ENCODE measurements at regions of chr14 and their contacts with region 1.

Region 1: DNA sequence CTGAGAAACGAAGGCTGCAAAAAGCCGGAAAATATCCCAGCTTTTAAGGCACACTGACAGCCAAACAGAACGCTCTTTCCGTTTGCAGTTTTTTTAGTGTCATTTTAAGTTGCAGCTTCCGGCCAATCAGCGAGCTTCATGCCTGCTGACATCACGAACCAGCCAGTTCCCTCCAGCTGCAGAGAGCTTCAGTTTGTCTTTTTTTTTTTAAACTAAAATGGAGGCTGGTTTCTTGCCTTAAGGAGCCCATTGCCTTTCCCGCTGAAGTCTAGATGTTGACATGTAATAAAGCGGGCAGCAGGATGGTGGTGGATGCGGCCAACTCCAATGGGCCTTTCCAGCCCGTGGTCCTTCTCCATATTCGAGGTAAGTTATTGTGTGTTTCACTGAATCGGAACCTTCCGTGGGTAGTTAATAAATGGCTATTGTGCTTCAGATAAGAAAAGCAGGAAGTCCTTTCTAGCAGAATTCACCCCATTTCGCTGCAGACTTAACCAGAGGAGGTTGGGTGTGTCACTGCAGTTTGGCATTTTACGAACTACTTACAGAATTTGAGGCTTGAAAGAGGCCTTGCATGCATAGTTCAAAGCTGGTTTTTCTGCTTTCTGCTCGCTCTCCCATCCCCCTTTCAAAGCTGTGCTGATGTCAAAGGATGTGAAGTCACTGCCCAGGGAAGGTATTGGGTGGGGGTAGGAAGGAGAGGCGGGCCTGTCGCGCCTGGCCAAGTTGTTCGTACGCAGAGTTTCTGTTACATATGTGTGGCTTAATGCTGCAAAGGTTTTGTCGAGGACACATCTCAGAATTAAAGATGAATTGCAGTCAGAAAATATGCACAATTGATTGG is 48.4 kb downstream of the PPP2R5C start:
- DNase-seq: peak; percentile 91
- ATAC-seq: peak; percentile 96
- H3K4me3 ChIP-seq: peak overlapping the region; percentile 73 to 84 (median 77)
- H3K27ac ChIP-seq: peak overlapping the region; percentile 99
- H3K4me1 ChIP-seq: peaks cover 52% of the 10 kb centered on the region
- H3K27me3 ChIP-seq: no peaks in the 10 kb centered on the region
- CTCF ChIP-seq: no peak
- EP300 ChIP-seq: 0 out of 4 replicates have a peak, but pooled peaks of 1 of the 2 experiments have one; percentile 3
- POLR2A ChIP-seq: peak; percentile 60 to 85
- RAD21 ChIP-seq: no peak

Region 2: GRCh38 chr14:101495827-101496775 is 313.8 kb before region 1 on chr14:
- CTCF ChIA-PET with region 1: no interaction called
- POLR2A ChIA-PET with region 1: no interaction called
- in situ Hi-C with region 1: no loop called
- intact Hi-C with region 1: no loop called
- DNase-seq: peak; percentile 9
- ATAC-seq: peak; percentile 82
- H3K4me3 ChIP-seq: no peak overlapping the region
- H3K27ac ChIP-seq: no peak overlapping the region
- H3K4me1 ChIP-seq: peaks cover 20% of the 10 kb centered on the region
- H3K27me3 ChIP-seq: peaks cover 2 to 20% of the 10 kb centered on the region in 2 experiments; a peak in 2 of 5 replicates
- CTCF ChIP-seq: no peak
- EP300 ChIP-seq: 0 out of 4 replicates have a peak, but pooled peaks of 1 of the 2 experiments have one; percentile 32
- POLR2A ChIP-seq: no peak
- RAD21 ChIP-seq: no peak

Region 3: GRCh38 chr14:101743701-101744100 is 66.2 kb before region 1 on chr14:
- CTCF ChIA-PET with region 1: no interaction called
- POLR2A ChIA-PET with region 1: no interaction called
- in situ Hi-C with region 1: no loop called
- intact Hi-C with region 1: no loop called
- DNase-seq: no peak
- ATAC-seq: no peak
- H3K4me3 ChIP-seq: no peak overlapping the region
- H3K27ac ChIP-seq: no peak overlapping the region
- H3K4me1 ChIP-seq: no peaks in the 10 kb centered on the region
- H3K27me3 ChIP-seq: peaks cover 0 to 4% of the 10 kb centered on the region in 2 experiments; a peak in 1 of 5 replicates
- CTCF ChIP-seq: no peak
- EP300 ChIP-seq: no peak
- POLR2A ChIP-seq: no peak
- RAD21 ChIP-seq: no peak

Region 4: GRCh38 chr14:101774006-101774795 is 35.7 kb before region 1 on chr14:
- CTCF ChIA-PET with region 1: no interaction called
- POLR2A ChIA-PET with region 1: interaction called, 7 read pairs
- in situ Hi-C with region 1: no loop called
- intact Hi-C with region 1: loop called (anchors 5 kb)
- DNase-seq: no peak
- ATAC-seq: no peak
- H3K4me3 ChIP-seq: no peak overlapping the region
- H3K27ac ChIP-seq: no peak overlapping the region
- H3K4me1 ChIP-seq: peaks cover 15% of the 10 kb centered on the region
- H3K27me3 ChIP-seq: no peaks in the 10 kb centered on the region
- CTCF ChIP-seq: no peak
- EP300 ChIP-seq: no peak
- POLR2A ChIP-seq: no peak
- RAD21 ChIP-seq: no peak

Region 5: DNA sequence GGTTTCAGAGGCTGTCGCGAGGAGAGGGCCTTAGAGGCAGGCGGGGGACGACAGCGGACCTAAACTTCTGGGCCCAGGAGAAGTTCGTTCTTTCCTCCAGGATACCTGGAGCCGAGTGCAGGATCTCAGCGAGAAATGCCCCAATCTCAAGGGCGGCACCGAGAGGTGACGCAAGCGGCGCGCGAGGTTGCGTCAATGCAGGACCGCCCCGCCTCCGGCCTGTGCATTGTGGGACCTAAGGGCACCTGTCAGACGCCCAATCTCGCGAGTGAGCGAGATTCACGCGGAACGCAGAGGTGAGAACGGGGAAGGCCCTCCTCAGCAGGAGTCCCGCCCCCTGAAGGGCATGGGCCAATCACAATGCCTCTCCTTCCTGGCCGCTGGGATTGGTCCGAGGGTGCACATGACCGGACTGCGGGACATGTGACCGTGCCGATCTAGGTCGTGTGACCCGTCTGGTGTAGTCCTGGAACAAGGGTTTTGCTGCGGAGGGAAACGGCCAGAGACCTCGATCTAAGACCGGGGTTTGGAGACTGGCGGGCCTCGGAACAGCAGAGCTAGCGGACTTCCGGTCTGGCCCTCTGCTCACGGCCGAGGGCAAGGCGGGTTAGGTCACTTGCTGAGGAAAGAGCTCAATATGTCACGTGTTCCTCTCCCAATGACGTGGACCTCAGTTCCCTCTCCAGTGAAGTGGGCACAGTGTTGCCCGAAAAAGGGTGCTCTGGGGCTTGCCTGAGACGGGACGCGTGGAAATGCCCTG is 138.2 kb after region 1 on chr14:
- CTCF ChIA-PET with region 1: no interaction called
- POLR2A ChIA-PET with region 1: interaction called, 15 read pairs
- in situ Hi-C with region 1: no loop called
- intact Hi-C with region 1: loop called (anchors 2 kb)
- DNase-seq: peak; percentile 99
- ATAC-seq: peak; percentile 97
- H3K4me3 ChIP-seq: peak overlapping the region; percentile 88 to 96 (median 91)
- H3K27ac ChIP-seq: peak overlapping the region; percentile 91
- H3K4me1 ChIP-seq: peaks cover 20% of the 10 kb centered on the region
- H3K27me3 ChIP-seq: no peaks in the 10 kb centered on the region; a peak in 1 of 5 replicates
- CTCF ChIP-seq: 0 out of 2 replicates have a peak, but pooled peaks have one; percentile 2
- EP300 ChIP-seq: no peak; a peak in 1 of 4 replicates
- POLR2A ChIP-seq: peak; percentile 89 to 96
- RAD21 ChIP-seq: no peak; the same call in 1 of the 2 replicates

Region 6: DNA sequence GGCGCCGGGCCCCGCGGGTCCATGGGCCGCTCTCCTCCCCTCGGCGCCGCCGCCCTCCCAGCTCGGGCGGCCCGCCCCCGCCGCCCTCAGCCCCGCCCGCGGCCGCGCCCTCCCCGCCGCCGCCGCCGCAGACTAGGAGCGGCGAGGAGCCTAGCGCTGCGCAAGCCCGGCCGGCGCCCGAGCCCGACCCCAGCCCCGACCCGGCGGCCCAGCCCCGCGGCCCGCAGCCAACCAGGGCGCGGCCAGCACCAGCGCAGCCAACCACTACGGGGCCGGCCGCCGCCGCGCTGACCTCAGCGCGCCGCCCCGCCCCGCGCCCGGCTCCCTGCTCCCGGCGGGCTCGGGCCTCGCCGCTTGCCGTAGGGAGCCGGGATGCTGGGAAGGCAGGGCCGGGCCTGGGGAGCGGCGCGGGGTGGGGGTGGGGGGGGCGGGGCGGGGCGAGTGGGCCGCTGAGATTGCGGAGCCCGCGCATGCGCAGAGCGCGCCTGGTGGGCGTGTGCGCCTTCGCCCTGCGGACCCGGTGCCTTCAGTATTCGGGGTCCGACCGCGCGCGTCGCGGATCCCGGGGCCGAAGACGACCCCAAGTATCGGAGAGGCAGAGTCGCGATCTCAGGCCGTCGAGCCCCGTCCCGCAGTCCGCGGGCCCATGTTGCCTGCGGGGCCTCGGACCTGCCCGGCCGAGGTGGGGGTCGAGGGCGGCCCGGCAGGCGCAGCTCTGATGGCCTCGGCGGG is 1247.6 kb after region 1 on chr14 and contains the start of gene CDC42BPB:
- CTCF ChIA-PET with region 1: no interaction called
- POLR2A ChIA-PET with region 1: no interaction called
- in situ Hi-C with region 1: no loop called
- intact Hi-C with region 1: no loop called
- DNase-seq: peak; percentile 66
- ATAC-seq: peak; percentile 96
- H3K4me3 ChIP-seq: peak within 1 kb of the TSS; percentile 77 to 98 (median 91)
- H3K27ac ChIP-seq: peak within 1 kb of the TSS; percentile 63
- H3K4me1 ChIP-seq: peaks cover 42% of the 10 kb centered on the region
- H3K27me3 ChIP-seq: no peaks in the 10 kb centered on the region
- CTCF ChIP-seq: no peak
- EP300 ChIP-seq: no peak
- POLR2A ChIP-seq: peak in 1 of 2 experiments; percentile 49; a peak in 1 of 4 replicates
- RAD21 ChIP-seq: no peak
- total RNA-seq, gene CDC42BPB: 19.7 and 20.2 TPM in 2 replicates

Measured in HepG2 (cell line).